ENCODE measurements at regions of chr16 and their contacts with region 1.

Region 1: GRCh38 chr16:10752843-10753523 is 9.3 kb downstream of the NUBP1 start:
- DNase-seq: peak; percentile 74
- ATAC-seq: peak; percentile 90
- H3K4me3 ChIP-seq: 0 out of 2 replicates have a peak overlapping the region, but pooled peaks have one; percentile 2
- H3K27ac ChIP-seq: peak overlapping the region; percentile 49
- H3K4me1 ChIP-seq: peaks cover 31% of the 10 kb centered on the region
- H3K27me3 ChIP-seq: no peaks in the 10 kb centered on the region
- CTCF ChIP-seq: no peak
- EP300 ChIP-seq: peak in 1 of 2 experiments; percentile 72; a peak in 2 of 4 replicates
- POLR2A ChIP-seq: no peak
- RAD21 ChIP-seq: no peak

Region 2: GRCh38 chr16:10765772-10766171 is 12.8 kb after region 1 on chr16:
- CTCF ChIA-PET with region 1: interaction called, 4 read pairs
- POLR2A ChIA-PET with region 1: interaction called, 10 read pairs
- RAD21 ChIA-PET with region 1: interaction called, 10 read pairs
- SMC1A ChIA-PET with region 1: interaction called, 12 read pairs
- in situ Hi-C with region 1: no loop called
- intact Hi-C with region 1: no loop called
- DNase-seq: peak; percentile 33
- ATAC-seq: peak; percentile 91
- H3K4me3 ChIP-seq: no peak overlapping the region
- H3K27ac ChIP-seq: no peak overlapping the region
- H3K4me1 ChIP-seq: peaks cover 13% of the 10 kb centered on the region
- H3K27me3 ChIP-seq: no peaks in the 10 kb centered on the region
- CTCF ChIP-seq: no peak
- EP300 ChIP-seq: peak; percentile 8 to 54; a peak in 1 of 4 replicates
- POLR2A ChIP-seq: peak; percentile 46; the same call in 1 of the 2 replicates
- RAD21 ChIP-seq: no peak

Region 3: GRCh38 chr16:10770907-10771306 is 17.9 kb after region 1 on chr16:
- CTCF ChIA-PET with region 1: interaction called, 6 read pairs
- POLR2A ChIA-PET with region 1: interaction called, 10 read pairs
- RAD21 ChIA-PET with region 1: interaction called, 27 read pairs
- SMC1A ChIA-PET with region 1: interaction called, 14 read pairs
- in situ Hi-C with region 1: no loop called
- intact Hi-C with region 1: loop called (anchors 1 kb)
- DNase-seq: no peak
- ATAC-seq: no peak
- H3K4me3 ChIP-seq: no peak overlapping the region
- H3K27ac ChIP-seq: no peak overlapping the region
- H3K4me1 ChIP-seq: peaks cover 17% of the 10 kb centered on the region
- H3K27me3 ChIP-seq: no peaks in the 10 kb centered on the region
- CTCF ChIP-seq: no peak
- EP300 ChIP-seq: no peak
- POLR2A ChIP-seq: no peak
- RAD21 ChIP-seq: no peak

Measured in GM12878 (cell line).